Dorsolateral prefrontal cortex (tissue), 120 donors: ENCODE measurements at regions of chr15 and their contacts with region 1.

Region 1: DNA sequence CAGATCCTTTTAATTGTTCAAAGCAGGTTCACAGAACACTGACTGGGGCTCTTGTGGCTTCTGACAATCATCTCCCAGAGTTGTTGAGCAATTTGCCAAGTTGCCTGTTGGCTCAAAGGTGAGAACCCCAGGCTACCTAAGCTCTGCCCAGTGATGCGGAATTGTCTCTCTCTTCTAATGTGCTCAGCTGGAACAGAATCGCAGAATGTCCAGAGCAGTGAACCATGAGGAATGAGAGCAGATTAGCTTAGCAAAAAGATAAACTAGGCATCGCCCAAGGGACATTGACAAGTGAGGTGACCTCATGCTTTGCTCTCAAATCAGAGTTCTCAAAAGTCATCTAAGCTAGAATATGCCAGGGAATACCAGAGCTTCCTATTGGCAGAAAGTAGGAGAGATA is 148.1 kb downstream of the WDR76 start:
- DNase-seq: peak in 1 of 10 donors; percentile 73
- H3K4me3 ChIP-seq: no peak overlapping the region
- H3K27ac ChIP-seq: peak overlapping the region in 24 of 59 donors; percentile 0 to 65 (median 30)
- H3K27me3 ChIP-seq: no peaks in the 10 kb centered on the region
- CTCF ChIP-seq: no peak

Region 2: GRCh38 chr15:43872416-43873020 is 102.3 kb before region 1 on chr15:
- intact Hi-C with region 1: no loop called
- DNase-seq: peak in 8 of 10 donors; percentile 35 to 81 (median 61)
- H3K4me3 ChIP-seq: no peak overlapping the region
- H3K27ac ChIP-seq: peak overlapping the region in 43 of 59 donors; percentile 0 to 75 (median 50)
- H3K27me3 ChIP-seq: no peaks in the 10 kb centered on the region
- CTCF ChIP-seq: peak; percentile 40 to 89 (median 74)

Region 3: GRCh38 chr15:43920815-43921214 is 54.0 kb before region 1 on chr15:
- intact Hi-C with region 1: loop called in 1 of 2 experiments (anchors 5 kb)
- DNase-seq: peak in 1 of 10 donors; percentile 52
- H3K4me3 ChIP-seq: no peak overlapping the region
- H3K27ac ChIP-seq: peak overlapping the region in 50 of 59 donors; percentile 1 to 79 (median 63)
- H3K27me3 ChIP-seq: no peaks in the 10 kb centered on the region
- CTCF ChIP-seq: no peak